Vagina (tissue), 2 donors: ENCODE measurements at regions of chr1 and their contacts with region 1.

Region 1: GRCh38 chr1:229258031-229258756 is 12.7 kb upstream of the RAB4A start:
- DNase-seq: no peak
- H3K4me3 ChIP-seq: no peak overlapping the region
- H3K27ac ChIP-seq: no peak overlapping the region
- H3K4me1 ChIP-seq: peaks cover 11% of the 10 kb centered on the region
- H3K27me3 ChIP-seq: no peaks in the 10 kb centered on the region
- CTCF ChIP-seq: peak; percentile 82 to 93 (median 86)
- POLR2A ChIP-seq: no peak

Region 2: DNA sequence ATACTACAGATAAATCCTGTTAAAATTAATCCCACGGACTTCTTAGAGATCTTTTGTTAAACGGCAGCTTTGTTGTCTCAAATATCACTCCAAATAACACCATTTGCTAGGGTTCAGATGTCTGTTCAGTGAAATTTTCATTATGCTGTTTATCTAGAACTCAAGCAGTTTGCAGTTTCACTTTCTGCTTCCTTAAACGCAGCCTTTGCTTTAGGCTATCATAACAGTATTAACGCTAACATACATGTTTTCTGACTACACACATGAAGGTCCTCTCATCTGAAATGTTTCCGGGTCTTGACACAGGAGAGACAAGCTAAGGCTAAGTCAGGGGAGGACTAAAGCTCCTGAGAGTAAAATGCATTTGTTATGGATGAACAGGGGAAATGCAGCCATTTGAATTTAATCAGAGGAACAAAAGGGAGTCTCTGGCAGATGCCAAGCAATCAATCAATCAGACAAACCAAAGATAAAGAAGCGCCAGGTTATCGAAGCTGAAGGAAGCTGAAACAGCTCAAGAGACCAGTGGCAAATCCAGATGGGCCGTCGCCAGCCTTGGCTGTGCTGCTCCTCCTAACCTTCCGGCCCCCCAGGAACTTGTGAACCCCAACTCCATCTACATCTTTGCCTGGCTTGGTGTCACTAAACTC is 67.8 kb after region 1 on chr1:
- intact Hi-C with region 1: no loop called
- DNase-seq: no peak
- H3K4me3 ChIP-seq: no peak overlapping the region
- H3K27ac ChIP-seq: peak overlapping the region; percentile 20
- H3K4me1 ChIP-seq: no peaks in the 10 kb centered on the region
- H3K27me3 ChIP-seq: no peaks in the 10 kb centered on the region
- CTCF ChIP-seq: no peak
- POLR2A ChIP-seq: no peak

Region 3: GRCh38 chr1:229479660-229480399 is 221.6 kb after region 1 on chr1:
- intact Hi-C with region 1: loop called (anchors 10 kb)
- DNase-seq: no peak
- H3K4me3 ChIP-seq: no peak overlapping the region
- H3K27ac ChIP-seq: no peak overlapping the region
- H3K4me1 ChIP-seq: no peaks in the 10 kb centered on the region
- H3K27me3 ChIP-seq: no peaks in the 10 kb centered on the region
- CTCF ChIP-seq: no peak
- POLR2A ChIP-seq: no peak